MCF 10A (cell line): ENCODE measurements at regions of chr5 and their contacts with region 1.

Region 1: GRCh38 chr5:113513384-113514288 is at the start of gene YTHDC2:
- DNase-seq: peak; percentile 82
- H3K4me3 Mint-ChIP-seq: peak within 1 kb of the TSS; percentile 89
- H3K27ac Mint-ChIP-seq: peak within 1 kb of the TSS; percentile 91
- H3K4me1 Mint-ChIP-seq: peaks cover 40% of the 10 kb centered on the region
- H3K27me3 Mint-ChIP-seq: no peaks in the 10 kb centered on the region
- CTCF ChIP-seq: peak; percentile 8
- total RNA-seq, gene YTHDC2: 22.2 and 24.6 TPM in 2 replicates

Region 2: GRCh38 chr5:112551419-112552032 is 962.1 kb before region 1 on chr5:
- CTCF ChIA-PET with region 1: no interaction called
- POLR2A ChIA-PET with region 1: no interaction called
- intact Hi-C with region 1: loop called (anchors 5 kb)
- DNase-seq: peak; percentile 69
- H3K4me3 Mint-ChIP-seq: no peak overlapping the region
- H3K27ac Mint-ChIP-seq: no peak overlapping the region
- H3K4me1 Mint-ChIP-seq: peaks cover 8% of the 10 kb centered on the region
- H3K27me3 Mint-ChIP-seq: no peaks in the 10 kb centered on the region
- CTCF ChIP-seq: peak; percentile 68

Region 3: DNA sequence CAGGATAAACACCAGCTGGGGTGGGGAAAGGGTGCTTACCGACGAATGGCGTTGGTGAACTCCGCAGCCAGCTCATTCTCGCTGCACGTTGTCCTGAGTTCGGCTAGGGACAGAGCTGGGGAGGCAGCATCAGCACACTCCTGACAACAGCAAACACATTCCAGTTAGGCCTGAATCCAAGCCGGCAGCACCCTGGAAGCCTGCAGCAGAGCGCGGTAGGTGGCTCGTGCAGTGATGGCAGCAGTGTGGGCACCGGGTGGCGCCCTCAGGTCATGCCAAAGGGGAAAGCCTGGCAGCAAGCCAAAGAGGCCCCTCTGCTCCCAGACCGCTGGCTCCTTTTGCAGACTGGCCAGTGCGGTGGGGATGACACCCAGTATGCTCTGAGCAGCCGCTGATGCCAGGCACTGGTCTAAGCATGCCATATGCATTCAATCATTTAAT is 470.1 kb before region 1 on chr5:
- CTCF ChIA-PET with region 1: no interaction called
- POLR2A ChIA-PET with region 1: no interaction called
- intact Hi-C with region 1: loop called (anchors 5 kb)
- DNase-seq: no peak
- H3K4me3 Mint-ChIP-seq: no peak overlapping the region
- H3K27ac Mint-ChIP-seq: no peak overlapping the region
- H3K4me1 Mint-ChIP-seq: peaks cover 16% of the 10 kb centered on the region
- H3K27me3 Mint-ChIP-seq: no peaks in the 10 kb centered on the region
- CTCF ChIP-seq: no peak

Region 4: DNA sequence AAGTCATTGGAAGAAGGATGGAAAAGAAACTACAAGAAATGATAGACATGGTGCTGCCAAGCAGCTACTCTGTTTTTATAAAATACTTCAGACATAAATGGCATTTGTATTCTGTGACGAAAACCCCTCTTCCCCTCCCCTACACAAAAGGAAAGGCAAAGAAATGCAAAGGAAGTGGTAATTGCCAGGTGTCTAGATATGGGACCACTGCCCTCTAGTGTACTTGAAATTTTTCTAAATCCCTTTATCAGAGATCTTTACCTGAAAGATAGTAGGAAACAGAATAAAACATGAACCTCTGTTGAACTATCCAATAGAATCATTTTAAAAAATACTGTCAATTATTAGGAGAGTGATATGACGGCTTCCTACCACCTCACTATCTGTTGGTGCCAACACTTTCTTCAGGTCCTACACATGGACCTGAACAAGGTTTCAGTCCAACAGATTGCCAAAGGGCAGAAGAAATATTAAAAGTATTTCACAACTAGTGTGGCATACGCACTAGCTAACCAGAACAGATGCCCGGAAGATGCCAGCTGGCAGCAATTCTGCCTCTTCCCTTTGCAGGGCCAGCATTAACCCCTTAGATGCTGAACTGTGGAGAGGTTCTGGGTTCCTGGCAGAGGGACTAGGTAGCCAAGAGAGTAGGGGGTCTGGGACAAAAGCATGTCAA is 183.0 kb before region 1 on chr5:
- CTCF ChIA-PET with region 1: interaction called, 77 read pairs
- POLR2A ChIA-PET with region 1: interaction called, 10 read pairs
- intact Hi-C with region 1: no loop called
- DNase-seq: peak; percentile 93
- H3K4me3 Mint-ChIP-seq: peak overlapping the region; percentile 44
- H3K27ac Mint-ChIP-seq: peak overlapping the region; percentile 17
- H3K4me1 Mint-ChIP-seq: peaks cover 20% of the 10 kb centered on the region
- H3K27me3 Mint-ChIP-seq: no peaks in the 10 kb centered on the region
- CTCF ChIP-seq: peak; percentile 63

Region 5: GRCh38 chr5:113378959-113379541 is 134.6 kb before region 1 on chr5:
- CTCF ChIA-PET with region 1: interaction called, 109 read pairs
- POLR2A ChIA-PET with region 1: interaction called, 4 read pairs
- intact Hi-C with region 1: loop called (anchors 1 kb)
- DNase-seq: peak; percentile 73
- H3K4me3 Mint-ChIP-seq: no peak overlapping the region
- H3K27ac Mint-ChIP-seq: no peak overlapping the region
- H3K4me1 Mint-ChIP-seq: peaks cover 12% of the 10 kb centered on the region
- H3K27me3 Mint-ChIP-seq: no peaks in the 10 kb centered on the region
- CTCF ChIP-seq: peak; percentile 66

Region 6: GRCh38 chr5:113524927-113525326 is 11.3 kb after region 1 on chr5:
- CTCF ChIA-PET with region 1: interaction called, 4 read pairs
- POLR2A ChIA-PET with region 1: interaction called, 10 read pairs
- intact Hi-C with region 1: no loop called
- DNase-seq: no peak
- H3K4me3 Mint-ChIP-seq: no peak overlapping the region
- H3K27ac Mint-ChIP-seq: no peak overlapping the region
- H3K4me1 Mint-ChIP-seq: peaks cover 3% of the 10 kb centered on the region
- H3K27me3 Mint-ChIP-seq: no peaks in the 10 kb centered on the region
- CTCF ChIP-seq: no peak

Region 7: DNA sequence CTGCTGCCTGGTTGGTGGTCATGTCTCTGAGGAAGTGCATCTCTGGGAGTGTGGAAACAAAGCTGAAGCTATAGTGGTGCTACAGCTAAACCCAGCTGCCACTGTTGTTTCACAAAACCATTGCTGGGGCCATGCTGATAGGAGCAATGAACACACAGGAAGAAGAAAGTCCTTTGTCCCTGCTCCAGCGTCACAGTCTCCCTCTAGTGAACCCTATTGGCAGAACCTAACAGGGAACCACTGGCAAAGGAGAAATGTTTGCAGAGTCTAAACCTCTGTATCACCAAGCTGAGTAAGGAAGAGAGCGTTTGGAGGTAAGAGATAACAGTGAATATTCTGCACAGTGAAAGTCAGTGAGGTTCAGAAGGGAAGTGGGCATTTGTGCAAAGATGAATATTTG is 243.9 kb after region 1 on chr5:
- CTCF ChIA-PET with region 1: no interaction called
- POLR2A ChIA-PET with region 1: no interaction called
- intact Hi-C with region 1: no loop called
- DNase-seq: no peak
- H3K4me3 Mint-ChIP-seq: no peak overlapping the region
- H3K27ac Mint-ChIP-seq: no peak overlapping the region
- H3K4me1 Mint-ChIP-seq: no peaks in the 10 kb centered on the region
- H3K27me3 Mint-ChIP-seq: peaks cover 65% of the 10 kb centered on the region
- CTCF ChIP-seq: no peak